Caco-2 (cell line): ENCODE measurements at regions of chr19 and their contacts with region 1.

Region 1: GRCh38 chr19:50147462-50148423 is 15.3 kb downstream of the IZUMO2 start:
- DNase-seq: peak; percentile 94 to 96
- H3K4me3 ChIP-seq: peak overlapping the region; percentile 85
- H3K4me3 Mint-ChIP-seq: peak overlapping the region; percentile 82
- H3K27ac Mint-ChIP-seq: peak overlapping the region; percentile 50
- H3K4me1 ChIP-seq: no peaks in the 10 kb centered on the region; the same call in 1 of the 2 replicates
- H3K4me1 Mint-ChIP-seq: no peaks in the 10 kb centered on the region
- H3K27me3 ChIP-seq: no peaks in the 10 kb centered on the region
- H3K27me3 Mint-ChIP-seq: peaks cover 2% of the 10 kb centered on the region
- CTCF ChIP-seq: peak; percentile 40 to 92

Region 2: GRCh38 chr19:50203281-50204080 is 55.7 kb after region 1 on chr19 and contains the start of gene MYH14:
- CTCF ChIA-PET with region 1: interaction called, 5 read pairs
- POLR2A ChIA-PET with region 1: no interaction called
- intact Hi-C with region 1: loop called (anchors 2 kb)
- DNase-seq: peak; percentile 94 to 98
- H3K4me3 ChIP-seq: peak within 1 kb of the TSS; percentile 68
- H3K4me3 Mint-ChIP-seq: peak within 1 kb of the TSS; percentile 93
- H3K27ac Mint-ChIP-seq: peak within 1 kb of the TSS; percentile 97
- H3K4me1 ChIP-seq: peaks cover 12% of the 10 kb centered on the region
- H3K4me1 Mint-ChIP-seq: peaks cover 15% of the 10 kb centered on the region
- H3K27me3 ChIP-seq: no peaks in the 10 kb centered on the region
- H3K27me3 Mint-ChIP-seq: no peaks in the 10 kb centered on the region
- CTCF ChIP-seq: no peak
- total RNA-seq, gene MYH14: 78.3 and 89.8 TPM in 2 replicates

Region 3: GRCh38 chr19:50230379-50231351 is 82.9 kb after region 1 on chr19:
- CTCF ChIA-PET with region 1: interaction called, 10 read pairs
- POLR2A ChIA-PET with region 1: no interaction called
- intact Hi-C with region 1: no loop called
- DNase-seq: no peak
- H3K4me3 ChIP-seq: no peak overlapping the region
- H3K4me3 Mint-ChIP-seq: no peak overlapping the region
- H3K27ac Mint-ChIP-seq: peak overlapping the region; percentile 64
- H3K4me1 ChIP-seq: peaks cover 5% of the 10 kb centered on the region; the same call in 1 of the 2 replicates
- H3K4me1 Mint-ChIP-seq: peaks cover 9% of the 10 kb centered on the region
- H3K27me3 ChIP-seq: no peaks in the 10 kb centered on the region
- H3K27me3 Mint-ChIP-seq: no peaks in the 10 kb centered on the region
- CTCF ChIP-seq: no peak

Region 4: DNA sequence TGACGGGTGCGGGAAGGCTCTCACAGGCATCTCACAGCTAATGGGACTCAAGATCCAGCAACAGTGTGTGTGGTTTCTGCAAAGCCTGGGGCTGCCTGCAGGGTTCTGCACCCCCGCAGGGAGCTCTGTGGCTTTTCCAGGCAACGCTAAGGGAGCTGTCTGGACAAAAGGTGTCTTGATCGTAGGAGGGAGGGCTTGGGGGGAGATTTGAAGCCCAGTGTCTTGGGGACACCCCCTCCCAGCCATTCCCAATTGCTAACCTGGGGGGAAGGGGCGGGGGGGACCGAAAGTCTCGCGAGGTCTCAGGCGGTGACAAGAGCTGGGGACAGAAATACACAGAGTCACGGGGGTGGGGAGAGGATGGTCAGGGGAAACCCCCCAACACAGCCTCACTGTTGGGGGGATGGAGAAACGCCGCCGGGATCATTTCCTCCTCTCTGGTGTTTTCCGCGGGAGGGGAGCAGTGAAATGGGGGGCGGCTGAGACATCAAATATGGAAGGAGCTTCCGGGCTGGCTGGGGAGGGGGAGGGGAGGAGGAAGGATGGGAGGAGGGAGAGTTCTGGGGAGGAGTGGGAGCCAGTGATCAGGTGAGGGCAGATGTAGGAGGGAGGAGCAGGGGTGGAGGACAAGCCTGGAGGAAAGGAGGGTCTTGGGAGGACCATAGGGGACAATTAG is 168.2 kb after region 1 on chr19:
- CTCF ChIA-PET with region 1: interaction called, 10 read pairs
- POLR2A ChIA-PET with region 1: no interaction called
- intact Hi-C with region 1: no loop called
- DNase-seq: peak; percentile 58 to 68
- H3K4me3 ChIP-seq: peak overlapping the region; percentile 40
- H3K4me3 Mint-ChIP-seq: peak overlapping the region; percentile 75
- H3K27ac Mint-ChIP-seq: peak overlapping the region; percentile 14
- H3K4me1 ChIP-seq: peaks cover 11% of the 10 kb centered on the region; the same call in 1 of the 2 replicates
- H3K4me1 Mint-ChIP-seq: peaks cover 17% of the 10 kb centered on the region
- H3K27me3 ChIP-seq: no peaks in the 10 kb centered on the region; the same call in 1 of the 2 replicates
- H3K27me3 Mint-ChIP-seq: peaks cover 9% of the 10 kb centered on the region
- CTCF ChIP-seq: no peak